ENCODE measurements at regions of chr12 and their contacts with region 1.

Region 1: DNA sequence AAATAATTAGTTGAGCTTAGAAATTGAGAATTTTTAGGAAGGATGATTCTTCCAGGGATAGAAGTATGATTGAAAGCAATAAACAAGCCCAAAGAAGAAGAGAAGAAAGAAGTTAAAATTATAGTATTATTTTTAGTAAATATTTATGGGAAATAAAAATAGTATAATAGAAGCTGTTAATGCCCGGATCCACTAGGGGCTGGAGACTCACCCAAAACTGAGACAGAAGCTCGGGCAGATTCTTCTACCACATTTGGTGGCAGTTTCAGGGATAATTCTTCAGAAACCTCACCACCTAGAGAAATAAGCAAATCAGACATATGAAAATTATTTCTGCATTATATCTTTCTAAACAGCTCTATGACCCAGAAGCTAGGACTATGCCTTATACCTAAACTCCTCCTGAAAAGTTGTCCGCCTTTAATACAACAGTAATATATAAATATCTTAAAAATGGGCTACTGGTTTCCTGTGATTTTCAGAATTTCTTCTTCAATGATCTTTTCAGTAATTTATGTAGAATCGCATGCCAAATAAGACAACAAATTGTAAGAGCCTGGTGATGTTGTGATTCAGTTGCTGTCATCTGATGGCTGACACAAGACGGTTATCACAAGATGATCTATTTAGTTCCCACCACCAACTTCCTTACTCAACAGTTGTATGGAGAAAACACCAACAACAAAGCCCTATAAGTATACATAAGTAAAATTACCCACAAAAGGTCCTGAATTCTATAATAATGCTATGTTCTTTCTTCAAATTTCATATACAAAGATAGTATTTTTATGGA is 35.6 kb downstream of the A2M start:
- DNase-seq: no peak
- H3K4me3 ChIP-seq: no peak overlapping the region
- H3K27ac ChIP-seq: no peak overlapping the region
- H3K4me1 ChIP-seq: no peaks in the 10 kb centered on the region
- CTCF ChIP-seq: no peak

Region 2: GRCh38 chr12:9024512-9024911 is 55.6 kb before region 1 on chr12:
- CTCF ChIA-PET with region 1: no interaction called
- POLR2A ChIA-PET with region 1: no interaction called
- intact Hi-C with region 1: loop called (anchors 5 kb)
- DNase-seq: no peak
- H3K4me3 ChIP-seq: no peak overlapping the region
- H3K27ac ChIP-seq: no peak overlapping the region
- H3K4me1 ChIP-seq: no peaks in the 10 kb centered on the region
- CTCF ChIP-seq: no peak

Region 3: DNA sequence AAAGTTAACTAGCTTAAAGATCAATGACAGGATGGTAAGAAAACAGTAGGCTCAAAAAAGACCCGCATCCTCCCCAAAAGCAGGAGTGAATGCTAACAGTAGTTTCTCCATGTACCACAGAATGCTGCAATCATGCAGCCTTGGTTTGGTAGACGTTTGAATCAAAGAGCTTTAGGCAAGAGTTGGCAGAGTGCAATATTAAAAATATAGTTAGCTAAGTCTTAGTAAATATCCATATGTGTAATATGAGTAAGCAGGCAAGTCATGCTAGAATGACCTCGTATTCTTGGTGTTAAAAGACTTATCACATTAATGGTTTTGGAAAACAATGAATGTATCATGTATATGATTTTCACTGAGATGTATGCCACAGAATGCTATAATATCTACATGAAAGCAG is 728.4 kb after region 1 on chr12:
- CTCF ChIA-PET with region 1: no interaction called
- POLR2A ChIA-PET with region 1: no interaction called
- intact Hi-C with region 1: no loop called
- DNase-seq: no peak
- H3K4me3 ChIP-seq: no peak overlapping the region
- H3K27ac ChIP-seq: no peak overlapping the region
- H3K4me1 ChIP-seq: peaks cover 2% of the 10 kb centered on the region
- CTCF ChIP-seq: no peak